Activated CD4-positive, alpha-beta memory T cell treated with anti-CD3 and anti-CD28 coated beads for 36 hours (primary cell): ENCODE measurements at regions of chr20 and their contacts with region 1.

Region 1: DNA sequence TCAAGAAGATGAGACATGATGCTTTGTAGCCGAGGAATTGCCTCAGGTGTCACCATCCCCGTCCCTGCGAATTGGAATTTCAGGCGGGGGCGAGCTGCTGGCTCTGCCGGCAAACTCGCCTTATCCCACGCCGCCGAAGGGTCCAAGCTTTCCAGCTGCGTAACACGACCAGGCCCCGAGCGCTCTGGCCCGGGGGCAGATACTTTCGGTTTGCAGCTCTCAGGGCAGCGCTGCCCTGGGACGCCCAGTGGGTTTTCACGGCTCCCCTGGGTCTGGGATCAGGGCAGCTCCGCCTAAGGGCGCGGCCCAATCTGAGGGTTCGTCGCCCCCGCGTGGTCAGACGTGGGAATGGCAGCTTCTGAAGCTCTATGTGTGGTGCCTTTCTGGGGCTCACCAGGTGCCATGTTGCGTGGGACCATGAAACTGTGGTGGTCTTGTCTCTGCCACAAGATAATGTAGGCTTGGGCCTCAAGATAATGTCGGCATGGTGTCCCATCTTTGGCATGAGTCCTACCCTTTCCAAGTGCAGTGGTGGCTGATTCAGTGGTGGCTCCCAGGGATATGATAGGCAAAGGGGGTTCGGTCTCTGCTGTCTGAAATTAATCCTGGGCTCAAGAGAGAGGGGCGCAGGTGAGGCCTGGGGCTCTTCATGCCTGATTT is 20.9 kb downstream of the PIGT start:
- DNase-seq: peak; percentile 90
- H3K4me3 Mint-ChIP-seq: peak overlapping the region; percentile 73
- H3K27ac Mint-ChIP-seq: no peak overlapping the region
- H3K4me1 Mint-ChIP-seq: peaks cover 15% of the 10 kb centered on the region
- H3K27me3 Mint-ChIP-seq: no peaks in the 10 kb centered on the region

Region 2: DNA sequence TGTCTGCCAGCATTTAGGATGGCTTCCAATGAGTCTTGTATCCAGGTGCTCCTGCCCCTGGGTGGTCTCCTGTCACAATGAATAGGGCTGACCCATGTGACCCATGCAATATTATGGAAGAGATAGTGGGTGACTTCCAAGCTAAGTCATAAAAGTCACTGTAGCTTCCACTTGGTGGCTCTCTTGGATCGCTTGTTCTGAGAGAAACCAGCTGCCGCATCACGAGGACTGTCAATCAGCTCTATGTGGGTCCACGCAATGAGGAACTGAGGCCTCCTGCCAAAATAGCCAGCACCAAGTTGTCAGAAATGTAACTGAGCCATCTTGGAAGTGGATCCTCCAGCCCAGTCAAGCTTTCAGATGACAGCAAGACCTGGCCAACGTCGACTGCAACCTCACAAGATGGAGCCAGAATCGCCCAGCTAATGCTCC is 113.9 kb before region 1 on chr20:
- CTCF ChIA-PET with region 1: interaction called, 133 read pairs
- POLR2A ChIA-PET with region 1: interaction called, 3 read pairs
- intact Hi-C with region 1: loop called (anchors 1 kb)
- DNase-seq: no peak
- H3K4me3 Mint-ChIP-seq: no peak overlapping the region
- H3K27ac Mint-ChIP-seq: no peak overlapping the region
- H3K4me1 Mint-ChIP-seq: peaks cover 26% of the 10 kb centered on the region
- H3K27me3 Mint-ChIP-seq: no peaks in the 10 kb centered on the region

Region 3: GRCh38 chr20:45355209-45356084 is 81.4 kb before region 1 on chr20:
- CTCF ChIA-PET with region 1: interaction called, 503 read pairs
- POLR2A ChIA-PET with region 1: no interaction called
- intact Hi-C with region 1: no loop called
- DNase-seq: peak; percentile 39
- H3K4me3 Mint-ChIP-seq: peak overlapping the region; percentile 54
- H3K27ac Mint-ChIP-seq: peak overlapping the region; percentile 88
- H3K4me1 Mint-ChIP-seq: peaks cover 50% of the 10 kb centered on the region
- H3K27me3 Mint-ChIP-seq: no peaks in the 10 kb centered on the region

Region 4: DNA sequence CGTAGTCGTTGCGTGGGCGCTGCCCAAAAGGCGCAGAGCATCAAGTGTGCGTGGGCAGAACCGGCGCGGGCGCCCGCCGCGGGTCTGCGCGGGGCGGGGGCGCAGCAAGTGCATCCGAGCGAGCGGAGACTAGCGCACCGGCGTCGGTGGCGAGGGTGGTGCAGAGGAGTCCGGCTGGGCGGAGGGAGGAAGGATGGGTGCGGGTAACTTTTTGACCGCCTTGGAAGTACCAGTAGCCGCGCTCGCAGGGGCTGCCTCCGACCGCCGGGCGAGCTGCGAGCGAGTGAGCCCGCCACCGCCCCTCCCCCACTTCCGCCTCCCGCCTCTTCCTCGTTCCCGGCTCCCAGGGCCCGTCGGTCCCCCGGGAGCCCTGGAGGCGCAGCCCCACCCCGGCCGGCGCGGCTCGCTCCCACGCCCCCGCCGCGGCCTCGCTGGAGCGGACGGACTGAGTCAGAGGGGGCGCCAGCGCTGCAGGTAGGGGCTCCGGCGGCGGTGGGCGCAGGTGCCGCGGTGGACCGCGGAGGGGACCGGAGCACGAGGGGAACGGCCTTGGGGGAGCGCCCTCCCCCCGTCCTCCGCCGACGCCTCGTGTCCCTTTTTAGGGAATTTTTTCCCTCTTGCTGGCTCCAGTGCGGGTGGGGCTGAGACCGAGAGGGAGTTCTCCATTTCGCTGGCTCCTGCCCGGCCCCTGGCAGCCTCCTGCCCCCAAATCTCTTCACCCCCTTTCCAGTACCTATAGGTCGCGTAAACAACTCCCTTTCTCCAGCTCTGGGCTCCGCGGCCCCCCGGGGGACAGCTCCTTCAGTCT is 30.4 kb before region 1 on chr20:
- CTCF ChIA-PET with region 1: interaction called, 14 read pairs
- POLR2A ChIA-PET with region 1: no interaction called
- intact Hi-C with region 1: no loop called
- DNase-seq: peak; percentile 60
- H3K4me3 Mint-ChIP-seq: peak overlapping the region; percentile 78
- H3K27ac Mint-ChIP-seq: peak overlapping the region; percentile 54
- H3K4me1 Mint-ChIP-seq: peaks cover 18% of the 10 kb centered on the region
- H3K27me3 Mint-ChIP-seq: peaks cover 2% of the 10 kb centered on the region

Region 5: GRCh38 chr20:45450097-45450818 is 13.4 kb after region 1 on chr20:
- CTCF ChIA-PET with region 1: interaction called, 70 read pairs
- POLR2A ChIA-PET with region 1: no interaction called
- intact Hi-C with region 1: no loop called
- DNase-seq: no peak
- H3K4me3 Mint-ChIP-seq: no peak overlapping the region
- H3K27ac Mint-ChIP-seq: no peak overlapping the region
- H3K4me1 Mint-ChIP-seq: no peaks in the 10 kb centered on the region
- H3K27me3 Mint-ChIP-seq: peaks cover 3% of the 10 kb centered on the region

Region 6: GRCh38 chr20:45507011-45507820 is 70.4 kb after region 1 on chr20:
- CTCF ChIA-PET with region 1: no interaction called
- POLR2A ChIA-PET with region 1: no interaction called
- intact Hi-C with region 1: no loop called
- DNase-seq: no peak
- H3K4me3 Mint-ChIP-seq: no peak overlapping the region
- H3K27ac Mint-ChIP-seq: no peak overlapping the region
- H3K4me1 Mint-ChIP-seq: peaks cover 10% of the 10 kb centered on the region
- H3K27me3 Mint-ChIP-seq: peaks cover 37% of the 10 kb centered on the region

Region 7: DNA sequence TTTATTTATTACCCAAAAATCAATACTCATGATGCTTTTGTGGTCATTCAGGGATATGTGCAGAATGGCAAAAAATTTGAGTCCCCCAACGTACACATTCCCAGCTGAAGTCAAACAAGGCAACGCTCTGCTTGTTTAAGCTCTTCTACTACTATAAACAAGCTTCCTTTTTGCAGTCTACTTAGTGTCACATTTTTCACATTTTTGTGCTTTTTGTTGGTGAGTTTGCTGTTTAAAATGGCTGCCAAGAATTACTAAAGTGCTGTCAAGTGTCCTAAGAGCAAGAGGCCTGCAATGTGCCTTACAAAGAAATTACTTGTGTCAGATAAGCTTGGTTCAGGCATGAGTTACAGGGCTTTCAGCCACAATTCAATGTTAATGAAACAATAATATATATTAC is 140.1 kb after region 1 on chr20:
- CTCF ChIA-PET with region 1: no interaction called
- POLR2A ChIA-PET with region 1: no interaction called
- intact Hi-C with region 1: no loop called
- DNase-seq: no peak
- H3K4me3 Mint-ChIP-seq: no peak overlapping the region
- H3K27ac Mint-ChIP-seq: no peak overlapping the region
- H3K4me1 Mint-ChIP-seq: no peaks in the 10 kb centered on the region
- H3K27me3 Mint-ChIP-seq: peaks cover 13% of the 10 kb centered on the region

Region 8: DNA sequence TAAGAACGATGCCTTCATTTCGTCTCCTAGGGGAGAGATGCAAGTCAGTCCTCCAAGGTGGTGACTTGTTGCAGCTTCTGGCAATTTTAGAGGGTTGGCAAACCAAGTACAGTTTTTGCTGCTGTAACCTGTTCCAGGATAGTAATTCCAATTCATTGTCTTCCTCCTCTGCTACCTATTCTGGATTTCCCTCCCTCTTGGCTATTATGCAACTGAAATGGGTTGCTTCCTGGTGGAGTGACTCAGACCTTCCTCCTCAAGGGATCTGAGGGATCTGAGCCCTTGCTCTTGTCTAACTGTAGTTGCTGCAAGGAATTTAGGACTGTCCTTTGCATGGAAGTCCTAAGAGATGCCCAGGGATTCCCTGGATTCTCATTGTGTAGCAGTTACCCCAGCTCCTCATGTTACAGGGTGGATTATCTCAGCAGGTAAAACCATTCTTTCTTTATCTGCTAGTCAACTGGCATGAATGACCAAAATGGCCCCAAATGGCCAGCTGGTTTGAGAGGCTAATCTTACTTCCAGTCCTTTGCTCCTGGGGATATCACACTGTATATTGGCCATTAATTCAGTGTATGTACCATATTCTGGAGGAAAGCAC is 987.1 kb after region 1 on chr20:
- CTCF ChIA-PET with region 1: no interaction called
- POLR2A ChIA-PET with region 1: no interaction called
- intact Hi-C with region 1: no loop called
- DNase-seq: no peak
- H3K4me3 Mint-ChIP-seq: no peak overlapping the region
- H3K27ac Mint-ChIP-seq: no peak overlapping the region
- H3K4me1 Mint-ChIP-seq: no peaks in the 10 kb centered on the region
- H3K27me3 Mint-ChIP-seq: peaks cover 29% of the 10 kb centered on the region